Activated CD8-positive, alpha-beta T cell treated with anti-CD3 and anti-CD28 coated beads, Interleukin-2, amount 10 ng/mL, durations not matched to agents 7 days and 5 days (primary cell): ENCODE measurements at regions of chr21 and their contacts with region 1.

Region 1: GRCh38 chr21:46551636-46552241 is 53.1 kb downstream of the S100B start:
- DNase-seq: peak; percentile 58
- ATAC-seq: peak; percentile 63
- H3K4me3 Mint-ChIP-seq: peak overlapping the region; percentile 44
- H3K27ac Mint-ChIP-seq: peak overlapping the region; percentile 85
- H3K4me1 Mint-ChIP-seq: peaks cover 42% of the 10 kb centered on the region
- H3K27me3 Mint-ChIP-seq: no peaks in the 10 kb centered on the region

Region 2: DNA sequence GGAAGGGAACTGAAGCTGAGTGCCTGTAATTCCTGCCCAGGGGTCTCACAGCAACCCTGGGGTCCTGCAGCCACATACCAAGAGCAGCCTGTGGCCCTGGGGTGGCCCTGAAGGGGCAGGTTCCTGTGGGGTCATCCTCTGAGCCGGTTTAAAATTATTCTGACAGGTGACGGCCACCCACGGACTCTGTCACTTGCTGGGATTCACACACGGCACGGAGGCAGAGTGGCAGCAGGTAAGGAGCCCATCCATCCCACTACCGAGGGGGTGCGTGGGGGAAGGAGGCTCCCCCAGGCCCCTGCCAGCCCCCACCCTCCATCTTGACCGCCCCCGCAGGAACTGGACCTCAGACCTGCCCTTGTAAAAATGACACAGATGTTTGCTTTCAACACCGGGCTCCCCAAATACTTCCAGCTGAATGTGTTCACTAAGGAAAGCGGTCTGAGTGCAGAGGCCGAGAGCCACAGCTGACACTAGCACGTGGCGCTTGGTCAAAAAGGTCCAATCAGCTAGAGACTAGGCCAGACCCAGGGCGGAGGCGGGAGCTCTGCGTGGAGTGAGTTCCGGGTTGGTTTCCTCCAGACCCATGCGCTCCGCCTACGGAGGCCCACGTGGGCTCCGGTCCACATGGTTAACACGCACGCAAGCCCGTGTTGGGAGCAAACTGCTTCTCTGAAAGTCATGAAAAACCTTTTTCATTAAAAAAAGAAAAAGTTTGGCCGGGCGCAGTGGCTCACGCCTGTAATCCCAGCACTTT is 255.6 kb before region 1 on chr21:
- CTCF ChIA-PET with region 1: no interaction called
- POLR2A ChIA-PET with region 1: no interaction called
- DNase-seq: peak; percentile 72
- ATAC-seq: peak; percentile 82
- H3K4me3 Mint-ChIP-seq: peak overlapping the region; percentile 42
- H3K27ac Mint-ChIP-seq: peak overlapping the region; percentile 78
- H3K4me1 Mint-ChIP-seq: peaks cover 28% of the 10 kb centered on the region
- H3K27me3 Mint-ChIP-seq: no peaks in the 10 kb centered on the region

Region 3: DNA sequence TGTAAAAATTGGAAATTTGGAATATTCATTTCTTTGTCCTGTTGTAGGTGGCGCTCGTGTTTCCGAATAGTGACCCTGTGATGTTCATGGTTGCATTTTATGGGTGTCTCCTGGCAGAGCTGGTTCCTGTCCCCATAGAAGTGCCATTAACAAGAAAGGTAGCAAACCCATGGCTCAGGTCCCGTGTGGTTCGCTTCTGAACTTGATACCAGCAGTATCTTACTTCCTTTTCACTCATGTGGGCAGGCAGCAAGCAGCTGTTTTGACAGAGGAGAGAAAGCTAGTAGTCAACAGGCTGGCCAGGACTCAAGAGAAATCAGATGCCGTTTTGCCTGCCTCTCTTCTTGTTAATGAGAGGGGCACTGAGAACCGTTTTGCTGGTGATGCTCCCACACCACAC is 19.7 kb before region 1 on chr21:
- CTCF ChIA-PET with region 1: interaction called, 15 read pairs
- POLR2A ChIA-PET with region 1: no interaction called
- DNase-seq: peak; percentile 34
- ATAC-seq: peak; percentile 36
- H3K4me3 Mint-ChIP-seq: no peak overlapping the region
- H3K27ac Mint-ChIP-seq: peak overlapping the region; percentile 85
- H3K4me1 Mint-ChIP-seq: peaks cover 7% of the 10 kb centered on the region
- H3K27me3 Mint-ChIP-seq: no peaks in the 10 kb centered on the region

Region 4: DNA sequence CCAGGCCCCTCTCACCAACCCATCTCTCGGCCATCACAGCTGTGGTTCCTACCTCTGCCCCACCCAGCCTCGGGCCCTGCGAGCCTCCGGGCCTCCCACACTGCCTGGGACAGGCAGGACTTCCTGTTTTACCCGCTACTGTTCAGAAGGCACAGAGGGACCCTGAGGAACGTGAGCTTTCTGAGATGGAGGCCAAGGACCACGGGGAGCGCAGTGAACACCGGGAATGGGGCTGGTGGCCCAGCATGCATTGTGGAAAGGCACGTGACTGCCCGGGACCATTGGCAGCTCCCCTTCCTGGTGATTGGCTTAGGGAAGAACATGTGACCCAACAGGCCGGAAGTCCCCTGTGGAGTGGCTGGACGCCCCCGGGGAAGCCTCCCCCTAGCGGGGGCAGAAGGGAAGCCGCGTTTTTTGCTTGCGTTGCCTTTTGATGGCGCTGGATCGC is 46.2 kb after region 1 on chr21:
- CTCF ChIA-PET with region 1: no interaction called
- POLR2A ChIA-PET with region 1: no interaction called
- DNase-seq: no peak
- ATAC-seq: no peak
- H3K4me3 Mint-ChIP-seq: no peak overlapping the region
- H3K27ac Mint-ChIP-seq: no peak overlapping the region
- H3K4me1 Mint-ChIP-seq: peaks cover 16% of the 10 kb centered on the region
- H3K27me3 Mint-ChIP-seq: no peaks in the 10 kb centered on the region